Activated naive CD4-positive, alpha-beta T cell treated with anti-CD3 and anti-CD28 coated beads for 36 hours (primary cell): ENCODE measurements at regions of chr3 and their contacts with region 1.

Region 1: DNA sequence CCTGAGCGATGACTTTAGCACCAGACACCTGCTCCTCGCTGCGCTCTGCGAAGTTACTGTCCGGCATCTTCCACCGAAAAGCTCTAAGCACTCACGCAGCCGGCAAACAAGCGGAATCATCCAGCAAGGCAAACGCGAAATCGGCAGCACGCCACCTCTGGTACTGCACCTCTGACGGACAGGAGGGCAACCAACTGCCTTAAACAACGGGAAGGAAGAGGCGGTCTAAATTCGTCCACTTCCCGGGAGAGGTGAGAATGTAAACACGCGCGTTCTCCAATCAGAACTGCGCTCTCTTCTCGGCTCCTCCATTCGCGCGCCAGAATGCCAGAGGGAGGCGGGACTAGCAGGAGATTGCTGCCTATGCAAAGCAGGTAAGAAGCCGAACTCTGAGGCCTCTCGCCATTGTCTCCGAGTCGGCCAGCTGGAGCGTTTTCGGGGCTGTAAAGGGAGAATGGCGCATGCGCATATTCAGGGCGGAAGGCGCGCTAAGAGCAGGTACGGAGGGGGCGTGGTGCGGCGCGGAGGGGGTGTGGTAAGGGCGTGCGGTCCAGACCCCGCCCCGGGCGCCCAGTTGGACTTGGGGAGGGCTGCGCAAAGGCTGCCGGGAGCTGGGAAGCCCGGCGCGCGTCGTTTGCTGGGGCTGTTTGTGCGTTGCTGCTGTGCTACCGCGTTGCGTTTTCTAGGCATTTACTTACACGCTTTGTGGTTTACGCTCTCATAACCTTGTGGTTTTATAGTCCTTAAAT is at the starts of genes BTD and HACL1:
- DNase-seq: peak; percentile 99
- H3K4me3 Mint-ChIP-seq: peak within 1 kb of the TSS; percentile 99
- H3K27ac Mint-ChIP-seq: peak within 1 kb of the TSS; percentile 96
- H3K4me1 Mint-ChIP-seq: peaks cover 46% of the 10 kb centered on the region
- H3K27me3 Mint-ChIP-seq: no peaks in the 10 kb centered on the region
- total RNA-seq, gene BTD: 8.7 to 9.7 TPM
- total RNA-seq, gene HACL1: 25.3 to 26.5 TPM

Region 2: GRCh38 chr3:15098503-15099363 is 502.8 kb before region 1 on chr3 and contains the start of gene RBSN:
- CTCF ChIA-PET with region 1: no interaction called
- intact Hi-C with region 1: loop called (anchors 1 kb)
- DNase-seq: peak; percentile 97
- H3K4me3 Mint-ChIP-seq: peak within 1 kb of the TSS; percentile 90
- H3K27ac Mint-ChIP-seq: peak within 1 kb of the TSS; percentile 83
- H3K4me1 Mint-ChIP-seq: peaks cover 10% of the 10 kb centered on the region
- H3K27me3 Mint-ChIP-seq: no peaks in the 10 kb centered on the region
- total RNA-seq, gene RBSN: 15.3 to 15.8 TPM

Region 3: DNA sequence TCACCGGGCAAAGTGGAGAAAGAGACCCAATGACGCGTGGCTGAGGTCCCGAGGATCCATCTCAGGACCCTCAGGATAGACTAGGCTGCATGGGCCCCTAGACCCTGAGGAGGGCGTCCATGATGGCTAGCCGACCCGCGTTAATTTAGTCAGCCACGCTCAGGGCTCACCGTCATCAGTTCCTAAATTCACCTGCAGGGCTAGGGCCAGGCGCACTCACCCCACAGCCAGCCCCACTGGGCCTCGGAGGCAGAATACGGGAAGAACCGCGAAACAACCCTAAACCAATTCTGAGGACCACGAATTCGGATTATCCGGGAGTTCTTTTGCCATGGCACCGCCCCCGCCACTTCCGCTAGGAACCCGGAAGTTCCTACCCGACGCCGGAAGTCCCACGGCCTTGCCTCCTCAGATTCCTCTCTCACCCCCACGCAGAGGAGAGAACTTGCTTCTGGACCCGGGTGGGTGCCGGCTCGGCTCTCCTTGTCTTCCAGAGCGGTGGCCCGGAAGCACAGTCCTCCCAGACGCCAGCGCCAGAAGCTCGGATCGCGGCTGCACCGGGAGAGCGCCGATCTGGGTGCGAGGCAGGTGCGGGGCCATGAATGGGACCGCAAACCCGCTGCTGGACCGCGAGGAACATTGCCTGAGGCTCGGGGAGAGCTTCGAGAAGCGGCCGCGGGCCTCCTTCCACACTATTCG is 174.2 kb before region 1 on chr3 and contains the starts of genes EAF1 and METTL6:
- CTCF ChIA-PET with region 1: no interaction called
- intact Hi-C with region 1: loop called (anchors 2 kb)
- DNase-seq: peak; percentile 92
- H3K4me3 Mint-ChIP-seq: peak within 1 kb of the TSS; percentile 90
- H3K27ac Mint-ChIP-seq: peak within 1 kb of the TSS; percentile 91
- H3K4me1 Mint-ChIP-seq: peaks cover 41% of the 10 kb centered on the region
- H3K27me3 Mint-ChIP-seq: no peaks in the 10 kb centered on the region
- total RNA-seq, gene EAF1: 19.5 to 20.6 TPM
- total RNA-seq, gene METTL6: 12.5 to 14.0 TPM

Region 4: DNA sequence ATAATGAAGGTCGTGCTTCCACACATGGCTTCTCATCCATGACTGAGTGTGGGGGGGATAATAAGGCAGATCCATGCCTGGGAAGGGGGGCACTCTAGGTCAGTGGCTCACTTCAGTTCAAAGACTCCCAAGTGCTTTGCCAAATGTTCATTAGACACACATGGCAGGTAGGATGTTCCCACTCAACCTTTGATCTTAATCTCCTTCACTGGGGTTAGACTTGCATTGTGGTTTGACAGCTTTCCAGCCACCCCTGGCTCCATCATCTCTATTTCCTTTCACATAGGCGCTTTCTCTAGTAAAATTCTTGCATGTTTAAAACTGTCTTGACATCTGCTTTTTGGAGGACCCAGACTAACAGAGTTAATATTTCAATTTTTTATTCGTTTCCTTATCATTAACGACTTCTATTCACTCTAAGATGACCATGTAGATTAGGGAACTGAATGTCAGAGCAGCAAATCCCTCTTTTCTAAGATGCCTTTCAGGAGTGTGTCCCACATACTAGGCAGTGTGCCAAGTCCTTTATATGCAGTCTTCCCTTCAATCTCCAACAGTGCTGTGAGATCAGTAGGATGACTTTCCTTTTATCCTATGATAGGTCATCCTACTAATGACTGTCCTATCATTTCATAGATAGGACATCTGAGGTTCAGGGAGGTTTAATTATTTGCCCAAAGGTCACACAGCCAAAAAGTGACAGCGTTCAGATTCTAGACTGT is 57.8 kb after region 1 on chr3:
- CTCF ChIA-PET with region 1: no interaction called
- intact Hi-C with region 1: no loop called
- DNase-seq: no peak
- H3K4me3 Mint-ChIP-seq: no peak overlapping the region
- H3K27ac Mint-ChIP-seq: no peak overlapping the region
- H3K4me1 Mint-ChIP-seq: peaks cover 5% of the 10 kb centered on the region
- H3K27me3 Mint-ChIP-seq: no peaks in the 10 kb centered on the region

Region 5: DNA sequence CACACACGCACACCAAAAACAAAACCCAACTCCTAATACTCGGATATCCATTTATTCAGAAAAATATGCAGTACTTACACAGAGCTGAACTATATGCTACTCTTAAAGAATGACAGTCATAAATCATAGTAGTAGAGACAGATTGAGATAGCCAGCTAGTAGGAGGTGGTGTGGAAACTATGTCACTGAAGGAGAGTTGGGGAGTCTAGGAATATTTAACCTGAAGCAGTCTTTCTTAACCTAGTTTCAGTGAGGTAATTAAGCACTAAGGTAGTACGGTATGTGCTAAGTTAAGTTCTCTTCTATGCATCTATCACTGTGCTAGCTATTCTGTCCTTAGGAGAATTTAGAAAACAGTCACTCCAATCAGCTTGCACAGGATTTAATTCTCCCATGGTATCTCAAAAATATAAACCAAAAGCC is 142.0 kb after region 1 on chr3:
- CTCF ChIA-PET with region 1: no interaction called
- intact Hi-C with region 1: loop called (anchors 1 kb)
- DNase-seq: no peak
- H3K4me3 Mint-ChIP-seq: no peak overlapping the region
- H3K27ac Mint-ChIP-seq: no peak overlapping the region
- H3K4me1 Mint-ChIP-seq: peaks cover 37% of the 10 kb centered on the region
- H3K27me3 Mint-ChIP-seq: no peaks in the 10 kb centered on the region

Region 6: GRCh38 chr3:16264708-16265454 is 663.3 kb after region 1 on chr3 and contains the starts of genes DPH3 and OXNAD1:
- CTCF ChIA-PET with region 1: no interaction called
- intact Hi-C with region 1: loop called (anchors 1 kb)
- DNase-seq: peak; percentile 100
- H3K4me3 Mint-ChIP-seq: peak within 1 kb of the TSS; percentile 96
- H3K27ac Mint-ChIP-seq: peak within 1 kb of the TSS; percentile 94
- H3K4me1 Mint-ChIP-seq: peaks cover 31% of the 10 kb centered on the region
- H3K27me3 Mint-ChIP-seq: no peaks in the 10 kb centered on the region
- total RNA-seq, gene DPH3: 16.1 to 17.0 TPM
- total RNA-seq, gene OXNAD1: 32.4 to 34.2 TPM